ENCODE measurements at regions of chr12 and their contacts with region 1.

Region 1: DNA sequence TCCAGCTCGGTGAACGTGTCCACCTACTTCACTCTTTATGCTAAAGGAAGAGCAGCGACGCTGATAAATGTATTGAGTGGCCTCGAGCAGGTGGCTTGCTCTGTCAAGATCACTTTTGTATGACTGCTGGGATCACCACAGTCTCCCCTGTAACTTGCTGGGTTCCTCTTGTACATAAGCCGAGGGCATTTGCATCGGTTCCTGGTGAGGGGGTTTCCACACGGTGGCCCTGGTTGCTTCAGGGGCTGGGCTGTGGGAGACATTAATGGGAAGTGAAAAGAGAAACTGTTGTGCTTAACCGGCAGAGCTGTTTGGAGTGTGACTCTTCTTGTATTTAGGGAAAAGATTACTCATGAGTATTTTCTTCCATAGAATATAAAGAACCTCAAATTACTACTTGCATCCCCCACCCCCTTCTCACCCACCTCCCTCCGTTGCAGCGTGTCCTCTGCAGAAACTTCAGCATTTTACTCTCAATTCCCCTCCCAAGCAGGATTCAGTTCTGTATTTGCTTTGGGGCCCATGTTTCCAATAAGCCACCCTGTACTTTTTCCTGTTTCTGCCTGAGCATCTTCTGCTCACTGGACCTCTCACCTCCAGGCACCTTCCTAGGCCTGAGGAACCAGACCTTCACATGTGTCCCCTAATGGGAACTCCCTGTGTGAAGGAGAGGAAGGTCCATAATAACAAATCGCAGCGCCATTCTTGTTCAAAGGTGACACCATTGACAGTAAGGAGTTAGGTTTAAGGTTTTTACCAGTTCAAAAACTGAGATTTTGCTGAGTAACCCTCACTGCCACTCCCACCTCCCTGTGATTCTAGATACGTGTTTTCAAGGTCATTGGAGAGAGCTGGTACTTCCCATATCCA is 187.0 kb downstream of the ETV6 start:
- DNase-seq: peak; percentile 84
- H3K4me3 Mint-ChIP-seq: peak overlapping the region; percentile 55
- H3K27ac Mint-ChIP-seq: peak overlapping the region; percentile 97
- H3K4me1 Mint-ChIP-seq: peaks cover 76% of the 10 kb centered on the region
- H3K27me3 Mint-ChIP-seq: no peaks in the 10 kb centered on the region

Region 2: GRCh38 chr12:11711651-11712327 is 124.7 kb before region 1 on chr12:
- intact Hi-C with region 1: loop called (anchors 1 kb)
- DNase-seq: no peak
- H3K4me3 Mint-ChIP-seq: no peak overlapping the region
- H3K27ac Mint-ChIP-seq: peak overlapping the region; percentile 10
- H3K4me1 Mint-ChIP-seq: peaks cover 55% of the 10 kb centered on the region
- H3K27me3 Mint-ChIP-seq: no peaks in the 10 kb centered on the region

Region 3: GRCh38 chr12:11780521-11781101 is 55.9 kb before region 1 on chr12:
- intact Hi-C with region 1: loop called (anchors 1 kb)
- DNase-seq: peak; percentile 54
- H3K4me3 Mint-ChIP-seq: peak overlapping the region; percentile 29
- H3K27ac Mint-ChIP-seq: peak overlapping the region; percentile 87
- H3K4me1 Mint-ChIP-seq: peaks cover 66% of the 10 kb centered on the region
- H3K27me3 Mint-ChIP-seq: no peaks in the 10 kb centered on the region

Region 4: GRCh38 chr12:11885261-11886038 is 48.9 kb after region 1 on chr12:
- intact Hi-C with region 1: loop called (anchors 5 kb)
- DNase-seq: no peak
- H3K4me3 Mint-ChIP-seq: no peak overlapping the region
- H3K27ac Mint-ChIP-seq: no peak overlapping the region
- H3K4me1 Mint-ChIP-seq: peaks cover 52% of the 10 kb centered on the region
- H3K27me3 Mint-ChIP-seq: no peaks in the 10 kb centered on the region

Region 5: GRCh38 chr12:11981121-11981733 is 144.7 kb after region 1 on chr12:
- intact Hi-C with region 1: loop called (anchors 1 kb)
- DNase-seq: peak; percentile 92
- H3K4me3 Mint-ChIP-seq: peak overlapping the region; percentile 68
- H3K27ac Mint-ChIP-seq: peak overlapping the region; percentile 99
- H3K4me1 Mint-ChIP-seq: peaks cover 62% of the 10 kb centered on the region
- H3K27me3 Mint-ChIP-seq: no peaks in the 10 kb centered on the region